AG04450 (cell line): ENCODE measurements at regions of chr12 and their contacts with region 1.

Region 1: DNA sequence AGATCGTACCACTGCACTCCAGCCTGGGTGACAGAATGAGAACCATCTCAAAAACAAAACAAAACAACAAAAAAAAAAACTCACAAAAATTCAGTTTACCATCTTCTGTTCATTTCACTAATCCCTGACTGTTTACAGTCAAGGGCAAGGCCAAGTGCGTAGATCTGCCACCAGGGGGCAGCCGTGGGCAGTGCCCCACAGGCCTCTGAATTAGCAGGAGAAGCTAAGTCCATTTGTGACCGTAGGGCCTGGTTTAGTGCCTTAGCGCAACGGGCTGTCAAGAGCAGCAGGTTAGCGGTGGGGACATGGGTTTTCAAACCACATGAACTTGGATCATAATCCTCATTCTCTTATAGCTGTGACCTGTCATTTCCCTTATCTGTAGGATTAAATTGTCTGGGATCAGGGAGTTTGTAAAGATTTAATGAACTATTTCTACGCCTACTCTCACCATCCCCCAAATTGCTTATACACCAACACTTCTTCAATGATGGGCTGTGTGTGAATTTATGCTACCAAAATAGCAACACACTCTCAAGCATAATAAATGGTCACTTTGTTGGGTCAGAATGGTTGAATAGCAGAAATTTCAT is 49.0 kb downstream of the KCTD10 start:
- DNase-seq: peak; percentile 59
- H3K4me3 ChIP-seq: no peak overlapping the region
- H3K27ac ChIP-seq: no peak overlapping the region
- H3K27me3 ChIP-seq: peaks cover 5% of the 10 kb centered on the region
- CTCF ChIP-seq: peak; percentile 99

Region 2: GRCh38 chr12:109336593-109336992 is 91.5 kb before region 1 on chr12:
- CTCF ChIA-PET with region 1: no interaction called
- POLR2A ChIA-PET with region 1: no interaction called
- DNase-seq: no peak
- H3K4me3 ChIP-seq: no peak overlapping the region
- H3K27ac ChIP-seq: no peak overlapping the region
- H3K27me3 ChIP-seq: peaks cover 3% of the 10 kb centered on the region
- CTCF ChIP-seq: no peak

Region 3: DNA sequence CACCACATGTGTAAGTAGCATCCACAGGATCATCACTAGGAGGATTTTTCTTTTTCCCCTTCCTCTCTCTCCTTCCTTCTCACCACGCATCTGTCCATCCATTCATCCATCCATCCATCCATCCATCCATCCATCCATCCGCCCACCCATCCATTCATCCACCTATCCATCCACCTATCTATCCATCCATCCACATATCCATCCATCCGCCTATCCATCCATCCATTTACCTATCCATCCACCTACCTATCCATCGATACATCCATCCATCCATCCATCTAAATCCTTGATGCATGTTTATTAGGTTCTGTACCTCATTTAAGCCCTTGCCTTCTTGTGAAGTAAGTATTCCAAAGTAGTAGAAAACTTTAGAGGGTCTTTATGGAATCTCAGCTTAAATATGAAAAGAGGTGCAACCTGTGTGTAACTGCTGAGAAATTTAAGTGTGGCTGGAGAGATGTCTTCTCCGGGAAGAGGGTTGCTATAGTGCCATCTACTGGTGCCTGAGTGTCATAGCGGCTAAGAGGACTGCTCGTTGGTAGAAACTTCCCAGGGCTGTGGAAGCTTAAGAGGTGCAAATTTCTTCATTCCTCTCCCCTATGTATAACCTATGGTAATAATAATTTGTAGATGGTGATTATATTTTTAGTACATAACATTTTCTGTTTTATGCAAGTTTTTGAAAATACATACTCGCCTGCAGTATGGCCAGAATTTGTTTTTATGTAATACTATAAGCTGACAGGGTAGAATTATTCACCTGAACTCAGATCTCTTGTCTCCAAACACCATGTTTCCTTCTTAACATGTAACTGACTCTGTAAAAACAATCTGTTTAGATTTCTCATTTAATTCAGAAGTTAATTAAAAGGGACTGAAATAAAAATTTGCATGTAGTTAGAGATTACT is 34.4 kb before region 1 on chr12:
- CTCF ChIA-PET with region 1: interaction called, 12 read pairs
- POLR2A ChIA-PET with region 1: no interaction called
- DNase-seq: peak; percentile 16
- H3K4me3 ChIP-seq: no peak overlapping the region
- H3K27ac ChIP-seq: no peak overlapping the region
- H3K27me3 ChIP-seq: peaks cover 2% of the 10 kb centered on the region
- CTCF ChIP-seq: peak; percentile 97

Region 4: GRCh38 chr12:109452489-109452888 is 24.4 kb after region 1 on chr12:
- CTCF ChIA-PET with region 1: interaction called, 14 read pairs
- POLR2A ChIA-PET with region 1: no interaction called
- DNase-seq: no peak
- H3K4me3 ChIP-seq: no peak overlapping the region
- H3K27ac ChIP-seq: no peak overlapping the region
- H3K27me3 ChIP-seq: no peaks in the 10 kb centered on the region
- CTCF ChIP-seq: no peak

Region 5: DNA sequence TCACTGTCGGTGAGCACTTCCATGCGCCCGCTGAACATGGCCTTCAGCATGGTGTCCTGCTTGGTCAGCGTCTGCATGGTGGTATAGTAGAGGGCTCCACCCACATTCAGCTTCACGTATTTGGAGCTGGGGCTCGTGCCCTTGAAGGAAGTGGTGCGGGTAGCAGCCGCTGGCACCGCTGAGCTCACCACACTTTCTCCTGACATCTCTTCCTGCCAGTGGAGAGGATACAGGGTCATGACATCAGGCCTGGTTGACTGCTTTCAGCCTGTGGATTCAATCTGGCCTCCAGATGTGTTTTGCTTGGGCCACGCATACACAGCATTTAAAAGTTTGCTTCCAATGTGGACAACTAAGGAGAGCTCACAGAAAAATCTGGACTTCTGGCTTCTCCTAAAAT is 41.4 kb after region 1 on chr12:
- CTCF ChIA-PET with region 1: interaction called, 38 read pairs
- POLR2A ChIA-PET with region 1: no interaction called
- DNase-seq: no peak
- H3K4me3 ChIP-seq: no peak overlapping the region
- H3K27ac ChIP-seq: peak overlapping the region; percentile 31
- H3K27me3 ChIP-seq: no peaks in the 10 kb centered on the region
- CTCF ChIP-seq: no peak

Region 6: DNA sequence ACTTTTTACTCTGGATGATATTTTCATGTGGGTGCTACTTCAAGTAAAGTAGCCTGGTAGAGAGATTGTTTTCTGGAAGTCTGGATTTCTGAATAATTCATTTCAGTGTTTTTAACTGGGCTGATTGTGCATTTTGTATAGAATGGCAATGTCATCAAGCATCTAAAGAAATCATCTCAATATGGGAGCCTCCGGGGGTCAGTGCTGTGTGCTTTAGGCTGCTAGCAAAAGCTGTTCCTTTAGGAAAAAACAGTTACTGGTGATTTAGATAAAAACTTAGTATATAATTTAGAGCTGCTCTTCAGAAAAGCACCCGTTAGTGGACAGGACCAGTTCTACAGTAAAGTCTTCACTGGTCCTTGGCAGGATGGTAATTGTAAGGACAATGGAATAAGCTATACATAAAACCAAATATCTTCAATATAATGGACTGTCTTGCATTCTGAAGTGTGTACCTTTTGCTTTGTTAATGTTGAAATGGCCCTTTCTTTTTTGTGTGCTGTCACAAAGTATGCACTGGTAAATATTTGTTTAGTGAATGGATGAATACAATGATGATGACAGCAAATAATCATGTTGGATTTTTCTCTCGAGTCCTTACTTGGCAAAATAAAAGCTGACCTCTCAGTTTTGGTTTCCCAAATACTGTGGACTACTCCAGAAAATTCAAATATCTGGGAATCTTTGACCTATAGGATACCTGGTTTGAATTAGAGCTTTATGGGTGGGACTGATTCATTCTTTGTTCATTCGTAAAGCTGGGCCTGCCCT is 54.5 kb after region 1 on chr12:
- CTCF ChIA-PET with region 1: interaction called, 20 read pairs
- POLR2A ChIA-PET with region 1: no interaction called
- DNase-seq: no peak
- H3K4me3 ChIP-seq: no peak overlapping the region
- H3K27ac ChIP-seq: no peak overlapping the region
- H3K27me3 ChIP-seq: no peaks in the 10 kb centered on the region
- CTCF ChIP-seq: no peak

Region 7: DNA sequence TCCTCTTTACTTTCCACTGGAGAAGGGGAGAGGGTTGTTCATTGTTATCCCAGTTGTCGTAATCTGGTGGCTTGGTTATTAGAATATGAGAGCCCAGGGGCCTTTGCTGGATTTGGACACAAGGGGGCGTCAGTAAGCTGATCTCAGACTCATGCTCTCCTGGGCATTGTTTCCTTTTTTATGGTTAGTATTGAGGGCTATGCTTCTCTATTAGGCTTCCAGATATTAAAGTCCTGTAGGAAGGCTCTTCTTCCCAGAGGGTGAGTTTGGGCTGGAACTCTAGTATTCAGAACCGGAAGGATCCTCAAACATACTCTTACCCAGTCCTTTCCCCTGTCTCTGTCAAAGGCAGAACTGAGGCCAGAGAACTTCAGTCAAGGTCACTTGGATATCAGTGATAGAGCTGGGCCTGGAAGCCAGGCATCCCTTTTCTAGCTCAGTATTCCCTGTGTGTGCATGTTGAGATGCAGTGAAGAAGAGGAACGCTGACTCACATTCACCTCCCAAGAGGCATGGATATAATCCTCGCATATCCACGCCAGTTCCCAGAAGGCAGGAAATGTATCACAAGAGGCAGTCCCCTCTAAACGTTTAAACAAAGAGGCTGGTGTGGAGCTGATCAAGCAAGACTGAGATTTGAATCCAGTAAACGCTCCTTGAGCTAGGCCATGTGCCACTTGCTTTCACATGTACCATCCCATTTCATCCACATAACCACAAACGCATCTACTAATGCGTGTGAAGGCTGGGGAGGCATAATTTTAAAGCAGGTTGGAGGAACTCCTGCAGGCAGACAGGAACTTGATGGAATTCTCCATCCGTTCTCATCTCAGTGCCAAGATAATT is 90.9 kb after region 1 on chr12:
- CTCF ChIA-PET with region 1: interaction called, 37 read pairs
- POLR2A ChIA-PET with region 1: no interaction called
- DNase-seq: peak; percentile 41
- H3K4me3 ChIP-seq: no peak overlapping the region
- H3K27ac ChIP-seq: peak overlapping the region; percentile 94
- H3K27me3 ChIP-seq: no peaks in the 10 kb centered on the region
- CTCF ChIP-seq: peak; percentile 93

Region 8: GRCh38 chr12:109544955-109545531 is 116.9 kb after region 1 on chr12:
- CTCF ChIA-PET with region 1: no interaction called
- POLR2A ChIA-PET with region 1: no interaction called
- DNase-seq: no peak
- H3K4me3 ChIP-seq: no peak overlapping the region
- H3K27ac ChIP-seq: no peak overlapping the region
- H3K27me3 ChIP-seq: peaks cover 14% of the 10 kb centered on the region
- CTCF ChIP-seq: no peak